Lower leg skin (tissue), 4 donors: ENCODE measurements at regions of chr11 and their contacts with region 1.

Region 1: DNA sequence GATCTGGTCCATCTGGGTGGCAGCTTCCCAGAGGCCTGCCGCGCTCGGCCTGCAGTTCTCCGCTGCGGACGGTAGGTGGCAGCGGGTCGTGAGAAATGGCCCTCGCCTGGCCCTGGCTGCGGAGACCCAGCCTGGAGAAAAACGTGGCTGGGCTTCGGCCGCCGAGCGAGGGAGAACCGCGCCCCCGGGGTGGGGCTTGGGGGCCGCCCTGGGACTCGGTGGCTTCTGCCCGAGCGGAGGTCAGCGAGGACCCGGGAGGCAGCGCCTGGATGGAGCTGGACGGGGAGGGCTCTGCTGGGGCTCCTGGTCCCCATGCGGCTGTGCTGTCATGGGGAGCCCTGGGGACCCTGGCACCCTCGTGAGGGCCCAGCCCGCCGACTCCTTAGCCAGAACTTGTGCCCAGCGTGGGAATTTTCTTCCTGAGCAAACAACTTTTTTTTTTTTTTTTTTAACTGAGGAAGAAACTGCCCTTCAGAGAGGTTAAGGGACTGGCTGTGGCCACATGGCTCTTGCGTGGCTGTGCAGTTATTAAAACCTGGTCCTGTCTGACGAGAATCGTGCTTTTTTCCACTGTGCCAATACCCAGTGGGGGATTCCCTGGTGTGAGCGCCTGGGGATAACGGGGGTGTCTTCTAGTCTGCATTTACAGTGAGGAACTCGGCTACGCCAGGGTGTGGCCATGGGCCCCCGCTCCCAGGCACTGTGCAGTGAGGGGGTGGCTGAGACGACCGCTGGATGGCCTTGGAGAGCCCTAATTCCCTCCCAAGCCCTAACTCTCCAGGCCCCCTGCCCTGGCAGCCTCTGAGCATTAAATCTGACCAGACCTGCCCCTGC is 535.6 kb downstream of the INSC start:
- DNase-seq: peak; percentile 87 to 98
- H3K4me3 ChIP-seq: no peak overlapping the region
- CTCF ChIP-seq: peak in 1 of 3 donors; percentile 87
- POLR2A ChIP-seq: no peak

Region 2: GRCh38 chr11:16613512-16614381 is 963.4 kb after region 1 on chr11:
- intact Hi-C with region 1: loop called (anchors 5 kb)
- DNase-seq: peak; percentile 79 to 96
- H3K4me3 ChIP-seq: no peak overlapping the region
- CTCF ChIP-seq: peak in 1 of 3 donors; percentile 34
- POLR2A ChIP-seq: no peak